CD8-positive, alpha-beta T cell (primary cell): ENCODE measurements at regions of chrX and their contacts with region 1.

Region 1: DNA sequence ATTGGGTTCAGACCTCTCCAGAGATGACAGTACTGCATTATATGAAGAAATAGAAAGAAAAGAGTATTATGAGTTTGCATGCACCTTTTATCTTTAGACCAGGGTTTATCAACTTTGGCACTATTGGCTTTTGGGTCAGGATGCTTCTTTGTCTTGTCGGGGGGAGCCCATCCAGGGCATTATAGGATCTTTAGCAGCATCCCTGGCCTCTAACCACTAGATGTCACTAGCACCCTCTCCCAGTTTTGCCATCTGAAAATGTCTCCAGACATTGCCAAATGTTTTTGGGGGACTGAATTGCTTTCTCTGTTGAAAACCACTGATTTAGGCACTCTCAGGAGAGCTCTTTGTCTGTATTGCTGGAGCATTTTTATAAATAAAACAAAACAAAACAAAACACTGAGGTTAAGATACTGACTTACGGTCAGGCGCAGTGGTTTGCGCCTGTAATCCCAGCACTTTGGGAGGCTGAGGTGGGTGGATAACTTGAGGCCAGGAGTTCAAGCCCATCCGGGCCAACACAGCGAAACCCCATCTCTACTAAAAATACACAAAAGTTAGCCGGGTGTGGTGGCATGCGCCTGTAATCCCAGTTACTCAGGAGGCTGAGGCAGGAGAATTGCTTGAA is 23.6 kb downstream of the CA5B start:
- DNase-seq: peak in 5 of 9 experiments; percentile 22 to 66 (median 50)
- ATAC-seq: peak; percentile 54
- H3K4me3 ChIP-seq: no peak overlapping the region
- H3K4me3 Mint-ChIP-seq: no peak overlapping the region
- H3K27ac ChIP-seq: no peak overlapping the region
- H3K27ac Mint-ChIP-seq: peak overlapping the region; percentile 52
- H3K4me1 ChIP-seq: peaks cover 15% of the 10 kb centered on the region
- H3K4me1 Mint-ChIP-seq: peaks cover 37% of the 10 kb centered on the region
- H3K27me3 ChIP-seq: no peaks in the 10 kb centered on the region
- H3K27me3 Mint-ChIP-seq: no peaks in the 10 kb centered on the region
- CTCF ChIP-seq: peak; percentile 32

Region 2: GRCh38 chrX:15686818-15687685 is 74.6 kb before region 1 on chrX:
- CTCF ChIA-PET with region 1: interaction called, 7 read pairs
- POLR2A ChIA-PET with region 1: no interaction called
- intact Hi-C with region 1: loop called (anchors 1 to 5 kb)
- DNase-seq: peak; percentile 16 to 79 (median 60)
- ATAC-seq: peak; percentile 87
- H3K4me3 ChIP-seq: no peak overlapping the region
- H3K4me3 Mint-ChIP-seq: no peak overlapping the region
- H3K27ac ChIP-seq: no peak overlapping the region
- H3K27ac Mint-ChIP-seq: no peak overlapping the region
- H3K4me1 ChIP-seq: peaks cover 5% of the 10 kb centered on the region
- H3K4me1 Mint-ChIP-seq: peaks cover 7% of the 10 kb centered on the region
- H3K27me3 ChIP-seq: no peaks in the 10 kb centered on the region
- H3K27me3 Mint-ChIP-seq: no peaks in the 10 kb centered on the region
- CTCF ChIP-seq: peak; percentile 45

Region 3: GRCh38 chrX:15737960-15738902 is 23.4 kb before region 1 on chrX and contains the start of gene CA5B:
- CTCF ChIA-PET with region 1: interaction called, 3 read pairs
- POLR2A ChIA-PET with region 1: interaction called, 7 read pairs
- intact Hi-C with region 1: loop called in 1 of 2 experiments (anchors 2 kb)
- DNase-seq: peak; percentile 93 to 100 (median 96)
- ATAC-seq: peak; percentile 96
- H3K4me3 ChIP-seq: peak within 1 kb of the TSS; percentile 84 to 85
- H3K4me3 Mint-ChIP-seq: peak within 1 kb of the TSS; percentile 94
- H3K27ac ChIP-seq: peak within 1 kb of the TSS; percentile 76 to 81
- H3K27ac Mint-ChIP-seq: peak within 1 kb of the TSS; percentile 92
- H3K4me1 ChIP-seq: peaks cover 23% of the 10 kb centered on the region
- H3K4me1 Mint-ChIP-seq: peaks cover 41% of the 10 kb centered on the region
- H3K27me3 ChIP-seq: no peaks in the 10 kb centered on the region
- H3K27me3 Mint-ChIP-seq: no peaks in the 10 kb centered on the region
- CTCF ChIP-seq: no peak
- total RNA-seq, gene CA5B: 33.9 to 35.2 TPM

Region 4: GRCh38 chrX:15749642-15750610 is 11.8 kb before region 1 on chrX:
- CTCF ChIA-PET with region 1: interaction called, 4 read pairs
- POLR2A ChIA-PET with region 1: interaction called, 3 read pairs
- intact Hi-C with region 1: loop called in 1 of 2 experiments (anchors 1 kb)
- DNase-seq: peak in 6 of 9 experiments; percentile 24 to 68 (median 42)
- ATAC-seq: peak; percentile 59
- H3K4me3 ChIP-seq: peak overlapping the region; percentile 13 to 17
- H3K4me3 Mint-ChIP-seq: peak overlapping the region; percentile 72
- H3K27ac ChIP-seq: peak overlapping the region; percentile 94 to 99
- H3K27ac Mint-ChIP-seq: peak overlapping the region; percentile 97
- H3K4me1 ChIP-seq: peaks cover 59% of the 10 kb centered on the region
- H3K4me1 Mint-ChIP-seq: peaks cover 77% of the 10 kb centered on the region
- H3K27me3 ChIP-seq: no peaks in the 10 kb centered on the region
- H3K27me3 Mint-ChIP-seq: no peaks in the 10 kb centered on the region
- CTCF ChIP-seq: no peak

Region 5: GRCh38 chrX:15789979-15790768 is 28.5 kb after region 1 on chrX and contains the start of gene ZRSR2:
- CTCF ChIA-PET with region 1: no interaction called
- POLR2A ChIA-PET with region 1: no interaction called
- intact Hi-C with region 1: loop called in 1 of 2 experiments (anchors 2 kb)
- DNase-seq: peak; percentile 68 to 94 (median 89)
- ATAC-seq: peak; percentile 92
- H3K4me3 ChIP-seq: peak within 1 kb of the TSS; percentile 78 to 85
- H3K4me3 Mint-ChIP-seq: no peak within 1 kb of the TSS
- H3K27ac ChIP-seq: peak within 1 kb of the TSS; percentile 89 to 92
- H3K27ac Mint-ChIP-seq: no peak within 1 kb of the TSS
- H3K4me1 ChIP-seq: peaks cover 18% of the 10 kb centered on the region
- H3K4me1 Mint-ChIP-seq: peaks cover 27% of the 10 kb centered on the region
- H3K27me3 ChIP-seq: no peaks in the 10 kb centered on the region
- H3K27me3 Mint-ChIP-seq: no peaks in the 10 kb centered on the region
- CTCF ChIP-seq: no peak
- total RNA-seq, gene ZRSR2: 21.1 to 21.2 TPM

Region 6: DNA sequence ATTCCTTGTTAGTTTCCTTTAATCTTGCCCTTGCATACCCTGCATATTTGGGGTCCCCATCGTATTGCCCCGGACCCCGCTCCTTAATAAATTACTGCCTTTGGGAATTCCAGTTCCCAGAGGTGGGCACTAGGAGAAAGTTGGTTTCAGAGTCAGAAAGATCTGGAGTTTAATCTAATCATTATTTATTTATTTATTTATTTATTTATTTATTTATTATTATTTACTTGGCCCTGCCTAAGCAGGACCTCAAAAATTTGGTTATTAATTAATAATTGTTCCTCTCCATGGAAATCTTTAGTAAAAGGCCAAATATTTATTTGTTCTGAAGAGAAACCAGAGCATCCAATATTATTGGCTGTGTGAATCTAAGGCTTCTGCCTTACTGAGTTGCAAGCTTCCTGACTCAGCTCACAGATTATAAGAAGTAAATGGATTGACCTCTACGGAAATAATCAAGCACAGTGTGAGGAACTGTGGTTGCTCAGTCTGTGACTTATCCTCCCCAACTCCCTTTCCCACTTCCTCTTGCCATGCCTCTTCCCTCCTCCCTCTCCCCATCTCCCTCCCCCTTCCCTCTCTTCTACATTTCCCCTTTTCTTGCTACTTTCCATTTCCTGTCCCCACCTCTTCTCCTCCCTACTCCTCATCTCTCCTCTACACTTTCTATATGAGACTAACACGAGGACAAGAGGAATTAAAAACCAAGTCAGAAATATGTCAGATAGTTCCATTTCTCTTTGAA is 154.5 kb after region 1 on chrX:
- CTCF ChIA-PET with region 1: no interaction called
- POLR2A ChIA-PET with region 1: no interaction called
- intact Hi-C with region 1: no loop called
- DNase-seq: peak in 1 of 9 experiments; percentile 1
- ATAC-seq: no peak
- H3K4me3 ChIP-seq: no peak overlapping the region
- H3K4me3 Mint-ChIP-seq: no peak overlapping the region
- H3K27ac ChIP-seq: no peak overlapping the region
- H3K27ac Mint-ChIP-seq: no peak overlapping the region
- H3K4me1 ChIP-seq: no peaks in the 10 kb centered on the region
- H3K4me1 Mint-ChIP-seq: no peaks in the 10 kb centered on the region
- H3K27me3 ChIP-seq: no peaks in the 10 kb centered on the region
- H3K27me3 Mint-ChIP-seq: peaks cover 5% of the 10 kb centered on the region
- CTCF ChIP-seq: no peak

Region 7: GRCh38 chrX:16160729-16161128 is 399.1 kb after region 1 on chrX:
- CTCF ChIA-PET with region 1: no interaction called
- POLR2A ChIA-PET with region 1: no interaction called
- intact Hi-C with region 1: no loop called
- DNase-seq: no peak
- ATAC-seq: no peak
- H3K4me3 ChIP-seq: no peak overlapping the region
- H3K4me3 Mint-ChIP-seq: no peak overlapping the region
- H3K27ac ChIP-seq: no peak overlapping the region
- H3K27ac Mint-ChIP-seq: no peak overlapping the region
- H3K4me1 ChIP-seq: no peaks in the 10 kb centered on the region
- H3K4me1 Mint-ChIP-seq: peaks cover 3% of the 10 kb centered on the region
- H3K27me3 ChIP-seq: no peaks in the 10 kb centered on the region
- H3K27me3 Mint-ChIP-seq: no peaks in the 10 kb centered on the region
- CTCF ChIP-seq: no peak

Region 8: DNA sequence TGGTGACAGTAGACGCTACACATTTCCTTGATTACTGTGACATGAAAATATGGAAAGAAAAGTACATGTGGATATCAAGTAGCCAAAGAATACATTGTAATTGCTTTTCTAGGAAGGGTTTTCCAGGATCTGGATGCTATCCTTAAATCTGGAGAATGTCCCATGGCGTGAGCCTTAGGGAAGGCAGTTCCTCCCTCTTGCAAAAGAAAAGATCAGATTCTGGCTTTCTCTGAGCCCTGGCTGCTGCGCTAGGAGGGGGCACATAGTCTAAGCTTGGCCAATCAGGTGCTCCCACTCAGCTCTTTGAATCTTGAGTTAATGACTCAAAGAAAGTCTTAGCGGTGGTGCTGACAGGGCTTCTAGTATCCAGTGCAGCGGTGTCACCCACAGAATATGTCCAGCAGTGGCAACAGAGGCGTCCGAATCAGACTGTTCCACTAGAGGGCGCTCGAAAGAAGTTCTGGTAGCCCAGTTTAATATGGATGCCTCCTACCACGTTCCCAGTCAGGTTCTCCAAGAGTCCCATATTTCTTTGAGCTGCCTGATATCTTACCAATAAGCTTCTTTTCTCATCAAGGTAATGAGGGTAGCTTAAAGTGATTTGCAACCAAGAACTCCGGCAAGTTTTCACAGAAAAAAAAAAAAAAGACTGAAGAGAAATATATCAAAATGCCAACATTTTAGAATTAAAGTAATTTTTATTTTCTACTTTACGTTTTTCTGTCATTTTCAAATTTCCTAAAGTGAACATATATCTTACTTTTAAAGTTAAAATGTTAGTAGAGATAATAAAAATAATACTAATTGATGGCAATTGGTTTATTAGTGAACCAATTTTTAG is 674.9 kb after region 1 on chrX:
- CTCF ChIA-PET with region 1: no interaction called
- POLR2A ChIA-PET with region 1: no interaction called
- intact Hi-C with region 1: loop called (anchors 10 kb)
- DNase-seq: peak; percentile 8 to 73 (median 56)
- ATAC-seq: peak; percentile 46
- H3K4me3 ChIP-seq: no peak overlapping the region
- H3K4me3 Mint-ChIP-seq: no peak overlapping the region
- H3K27ac ChIP-seq: no peak overlapping the region
- H3K27ac Mint-ChIP-seq: no peak overlapping the region
- H3K4me1 ChIP-seq: peaks cover 15% of the 10 kb centered on the region
- H3K4me1 Mint-ChIP-seq: peaks cover 15% of the 10 kb centered on the region
- H3K27me3 ChIP-seq: no peaks in the 10 kb centered on the region
- H3K27me3 Mint-ChIP-seq: no peaks in the 10 kb centered on the region
- CTCF ChIP-seq: peak; percentile 60